ENCODE measurements at regions of chr16 and their contacts with region 1.

Region 1: GRCh38 chr16:17013038-17013437 is 457.7 kb downstream of the XYLT1 start:
- DNase-seq: no peak
- ATAC-seq: no peak
- H3K4me3 Mint-ChIP-seq: peak overlapping the region; percentile 92
- H3K27ac Mint-ChIP-seq: peak overlapping the region; percentile 96
- H3K4me1 Mint-ChIP-seq: peaks cover 26% of the 10 kb centered on the region
- H3K27me3 Mint-ChIP-seq: no peaks in the 10 kb centered on the region
- CTCF ChIP-seq: no peak

Region 2: DNA sequence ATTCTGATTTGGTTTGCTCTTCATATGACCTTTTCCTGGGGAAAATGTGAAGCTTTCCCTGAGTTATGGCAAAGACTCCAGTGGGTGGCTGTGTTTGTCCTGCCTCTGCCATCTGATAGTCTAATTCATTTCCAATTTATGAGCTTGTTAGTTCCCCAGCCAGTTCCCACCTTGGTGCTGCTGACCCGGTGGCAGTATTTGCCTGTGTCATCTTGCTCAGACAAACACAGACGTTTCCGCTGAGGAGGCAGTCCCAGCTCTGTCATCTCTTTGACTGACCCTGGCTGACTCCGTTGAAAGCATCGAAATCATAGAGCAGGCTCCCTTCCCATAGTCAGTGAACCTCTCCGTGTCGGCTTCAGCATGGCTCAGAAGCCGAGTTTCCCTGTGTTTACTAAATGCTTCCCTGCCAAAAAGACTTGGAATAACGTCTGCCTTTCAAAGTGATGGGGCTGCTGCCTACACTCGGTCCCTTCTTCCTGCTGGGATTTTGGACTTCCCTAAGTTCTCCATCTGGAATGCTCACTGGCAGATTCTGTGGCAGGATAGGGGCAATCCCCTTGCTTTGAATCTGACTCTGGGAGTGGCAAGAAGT is 95.8 kb before region 1 on chr16:
- CTCF ChIA-PET with region 1: no interaction called
- POLR2A ChIA-PET with region 1: no interaction called
- intact Hi-C with region 1: no loop called
- DNase-seq: no peak
- ATAC-seq: no peak
- H3K4me3 Mint-ChIP-seq: no peak overlapping the region
- H3K27ac Mint-ChIP-seq: no peak overlapping the region
- H3K4me1 Mint-ChIP-seq: no peaks in the 10 kb centered on the region
- H3K27me3 Mint-ChIP-seq: peaks cover 19% of the 10 kb centered on the region
- CTCF ChIP-seq: no peak

Region 3: GRCh38 chr16:16991711-16992110 is 21.3 kb before region 1 on chr16:
- CTCF ChIA-PET with region 1: no interaction called
- POLR2A ChIA-PET with region 1: no interaction called
- intact Hi-C with region 1: loop called (anchors 2 kb)
- DNase-seq: no peak
- ATAC-seq: no peak
- H3K4me3 Mint-ChIP-seq: no peak overlapping the region
- H3K27ac Mint-ChIP-seq: no peak overlapping the region
- H3K4me1 Mint-ChIP-seq: peaks cover 28% of the 10 kb centered on the region
- H3K27me3 Mint-ChIP-seq: no peaks in the 10 kb centered on the region
- CTCF ChIP-seq: no peak

Region 4: GRCh38 chr16:17026600-17027242 is 13.7 kb after region 1 on chr16:
- CTCF ChIA-PET with region 1: no interaction called
- POLR2A ChIA-PET with region 1: interaction called, 4 read pairs
- intact Hi-C with region 1: loop called (anchors 2 kb)
- DNase-seq: no peak
- ATAC-seq: peak; percentile 62
- H3K4me3 Mint-ChIP-seq: peak overlapping the region; percentile 21
- H3K27ac Mint-ChIP-seq: peak overlapping the region; percentile 81
- H3K4me1 Mint-ChIP-seq: peaks cover 53% of the 10 kb centered on the region
- H3K27me3 Mint-ChIP-seq: no peaks in the 10 kb centered on the region
- CTCF ChIP-seq: no peak

Region 5: DNA sequence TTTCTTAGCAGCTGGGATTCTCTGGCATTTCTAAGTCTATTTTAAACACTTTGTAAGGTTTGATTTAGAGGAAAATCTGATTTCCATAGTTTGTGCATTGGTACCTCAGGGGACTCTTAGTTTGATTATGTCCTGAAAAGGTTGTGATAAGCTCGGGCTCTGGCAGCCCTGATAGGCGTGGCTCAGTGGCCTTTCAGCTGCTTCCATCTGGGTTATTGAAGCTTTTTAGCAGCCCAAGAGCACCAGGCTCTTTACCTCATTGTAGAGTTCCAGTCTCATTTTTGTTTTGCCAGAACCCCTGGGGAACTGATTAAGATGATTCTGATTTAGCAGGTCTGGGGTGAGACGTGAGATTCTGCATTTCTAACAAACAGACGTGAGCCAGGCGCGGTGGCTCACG is 45.4 kb after region 1 on chr16:
- CTCF ChIA-PET with region 1: no interaction called
- POLR2A ChIA-PET with region 1: no interaction called
- intact Hi-C with region 1: no loop called
- DNase-seq: no peak
- ATAC-seq: no peak
- H3K4me3 Mint-ChIP-seq: no peak overlapping the region
- H3K27ac Mint-ChIP-seq: no peak overlapping the region
- H3K4me1 Mint-ChIP-seq: peaks cover 13% of the 10 kb centered on the region
- H3K27me3 Mint-ChIP-seq: no peaks in the 10 kb centered on the region
- CTCF ChIP-seq: no peak

Region 6: DNA sequence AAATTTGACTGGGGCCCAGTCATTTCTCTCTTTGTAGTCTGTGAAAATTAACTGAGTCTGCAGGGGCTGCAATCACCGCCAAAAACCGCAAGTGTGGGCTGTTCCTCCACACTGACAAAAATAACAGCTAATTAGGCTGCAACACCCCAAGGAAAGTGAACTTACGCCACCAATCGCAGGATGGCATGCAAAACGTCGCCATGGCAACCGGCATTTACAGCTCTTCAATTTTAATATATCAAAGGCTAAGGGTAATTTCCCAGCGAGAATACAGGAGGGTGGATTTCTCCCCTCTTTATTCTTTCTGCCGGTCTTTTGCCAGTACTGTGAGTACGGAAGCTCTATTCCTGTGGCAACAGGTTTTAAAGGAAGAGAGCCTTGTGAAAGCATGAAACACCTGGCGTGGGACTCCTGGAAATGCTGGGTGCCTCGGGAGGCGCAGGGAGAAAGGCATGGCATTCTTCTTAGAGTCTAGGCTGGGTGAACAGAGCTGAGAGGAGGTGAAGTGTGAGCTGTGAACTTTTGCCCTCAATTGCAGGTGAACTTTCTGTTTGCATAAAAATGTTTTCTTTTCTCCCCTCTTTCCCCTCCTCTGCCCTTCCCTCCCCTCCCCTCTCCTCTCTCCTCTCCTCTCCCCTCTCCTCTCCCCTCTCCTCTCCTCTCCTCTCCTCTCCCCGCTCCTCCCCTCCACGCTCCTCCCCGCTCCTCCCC is 58.0 kb after region 1 on chr16:
- CTCF ChIA-PET with region 1: no interaction called
- POLR2A ChIA-PET with region 1: interaction called, 26 read pairs
- intact Hi-C with region 1: loop called (anchors 1 kb)
- DNase-seq: peak; percentile 67
- ATAC-seq: peak; percentile 82
- H3K4me3 Mint-ChIP-seq: peak overlapping the region; percentile 88
- H3K27ac Mint-ChIP-seq: peak overlapping the region; percentile 98
- H3K4me1 Mint-ChIP-seq: peaks cover 59% of the 10 kb centered on the region
- H3K27me3 Mint-ChIP-seq: no peaks in the 10 kb centered on the region
- CTCF ChIP-seq: no peak

Region 7: DNA sequence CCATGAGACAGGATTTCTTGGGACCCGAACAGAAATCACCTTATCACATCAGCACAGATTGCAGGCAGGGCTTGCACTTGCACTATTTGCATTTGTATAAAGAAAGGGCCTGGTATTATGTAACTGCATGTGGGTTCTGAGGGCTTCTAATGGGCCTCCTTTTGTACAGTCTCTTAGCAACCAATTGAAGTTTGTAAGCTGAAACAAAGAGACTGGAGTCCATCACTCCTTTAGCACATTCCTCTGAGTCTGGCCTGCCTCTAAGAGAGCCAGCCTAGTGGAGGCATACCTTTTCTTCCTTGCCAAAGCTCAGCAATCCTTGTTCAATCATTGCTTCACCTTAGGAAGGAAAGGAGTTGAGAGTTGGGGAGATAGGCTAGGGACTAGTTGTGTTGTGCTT is 70.6 kb after region 1 on chr16:
- CTCF ChIA-PET with region 1: no interaction called
- POLR2A ChIA-PET with region 1: no interaction called
- intact Hi-C with region 1: no loop called
- DNase-seq: no peak
- ATAC-seq: no peak
- H3K4me3 Mint-ChIP-seq: no peak overlapping the region
- H3K27ac Mint-ChIP-seq: no peak overlapping the region
- H3K4me1 Mint-ChIP-seq: peaks cover 4% of the 10 kb centered on the region
- H3K27me3 Mint-ChIP-seq: no peaks in the 10 kb centered on the region
- CTCF ChIP-seq: no peak

Region 8: GRCh38 chr16:17116595-17117296 is 103.7 kb after region 1 on chr16:
- CTCF ChIA-PET with region 1: no interaction called
- POLR2A ChIA-PET with region 1: interaction called, 12 read pairs
- intact Hi-C with region 1: no loop called
- DNase-seq: no peak
- ATAC-seq: no peak
- H3K4me3 Mint-ChIP-seq: no peak overlapping the region
- H3K27ac Mint-ChIP-seq: no peak overlapping the region
- H3K4me1 Mint-ChIP-seq: no peaks in the 10 kb centered on the region
- H3K27me3 Mint-ChIP-seq: no peaks in the 10 kb centered on the region
- CTCF ChIP-seq: no peak

Region 9: DNA sequence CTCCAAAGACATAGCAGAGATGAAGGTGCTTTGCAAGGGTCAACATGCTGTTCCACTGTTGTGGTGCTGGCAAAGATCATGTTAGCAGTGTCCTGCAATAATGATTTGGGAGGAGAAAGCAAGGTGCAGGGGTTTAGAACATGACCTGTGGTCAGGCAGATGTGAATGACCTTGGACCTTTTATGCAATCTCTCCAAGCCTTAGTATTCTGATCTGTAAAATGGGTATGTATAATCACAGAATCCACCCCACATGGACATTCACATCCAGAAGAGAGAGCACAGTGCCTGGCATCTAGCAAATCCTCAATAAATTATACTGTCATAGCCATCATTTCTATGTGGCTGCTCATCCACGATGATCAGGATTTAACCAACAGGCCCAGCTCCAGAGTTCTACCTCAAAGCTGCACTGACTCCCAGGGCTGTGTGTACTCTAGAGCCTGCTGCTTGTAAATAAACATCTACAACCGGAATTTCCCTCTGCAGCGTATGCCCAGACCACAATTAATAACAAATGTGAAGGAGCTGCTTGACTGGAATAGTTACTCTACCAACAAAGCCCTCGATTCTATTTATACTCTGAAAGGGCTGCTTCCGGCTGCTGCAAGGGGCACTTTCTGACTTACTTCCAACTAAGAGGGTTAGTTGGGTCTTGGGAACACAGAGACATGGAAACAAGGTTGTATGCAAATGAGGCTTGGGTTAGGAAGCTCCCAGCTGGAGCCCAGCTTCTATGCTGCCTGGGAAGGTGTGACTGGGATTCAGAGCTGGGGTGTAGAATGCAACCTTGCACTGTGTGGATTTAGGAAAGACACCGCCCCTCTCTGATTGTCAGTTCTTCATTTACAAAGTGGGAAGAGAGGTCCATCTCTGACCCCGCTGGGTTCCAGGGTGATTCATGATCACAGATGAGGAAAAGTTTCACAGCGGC is 192.5 kb after region 1 on chr16:
- CTCF ChIA-PET with region 1: no interaction called
- POLR2A ChIA-PET with region 1: no interaction called
- intact Hi-C with region 1: no loop called
- DNase-seq: no peak
- ATAC-seq: no peak
- H3K4me3 Mint-ChIP-seq: no peak overlapping the region
- H3K27ac Mint-ChIP-seq: no peak overlapping the region
- H3K4me1 Mint-ChIP-seq: peaks cover 6% of the 10 kb centered on the region
- H3K27me3 Mint-ChIP-seq: no peaks in the 10 kb centered on the region
- CTCF ChIP-seq: no peak